Left ventricle myocardium inferior (tissue), 1 donor: ENCODE measurements at regions of chr3 and their contacts with region 1.

Region 1: DNA sequence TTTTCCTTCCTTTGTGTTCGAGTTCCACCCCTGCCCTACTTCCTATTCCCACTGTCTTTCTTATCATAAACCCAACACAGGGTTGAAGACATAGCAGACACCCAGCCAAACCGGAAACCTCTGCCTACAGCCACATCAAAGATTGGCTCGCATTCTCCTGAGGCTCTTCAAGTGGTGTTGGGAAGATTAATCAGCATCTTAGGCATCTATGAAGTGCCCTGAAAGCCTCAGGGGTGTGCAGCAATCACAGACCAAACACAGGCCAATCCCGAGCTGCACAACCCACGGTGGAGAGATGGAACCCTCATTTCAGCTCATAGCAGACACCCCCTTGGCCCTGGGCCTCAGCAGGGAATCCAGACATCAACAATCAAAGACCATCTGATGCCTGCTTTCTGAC is 255.9 kb downstream of the XXYLT1 start:
- DNase-seq: no peak
- H3K4me3 ChIP-seq: no peak overlapping the region
- H3K27ac ChIP-seq: no peak overlapping the region
- H3K4me1 ChIP-seq: no peaks in the 10 kb centered on the region
- H3K27me3 ChIP-seq: no peaks in the 10 kb centered on the region
- CTCF ChIP-seq: no peak

Region 2: DNA sequence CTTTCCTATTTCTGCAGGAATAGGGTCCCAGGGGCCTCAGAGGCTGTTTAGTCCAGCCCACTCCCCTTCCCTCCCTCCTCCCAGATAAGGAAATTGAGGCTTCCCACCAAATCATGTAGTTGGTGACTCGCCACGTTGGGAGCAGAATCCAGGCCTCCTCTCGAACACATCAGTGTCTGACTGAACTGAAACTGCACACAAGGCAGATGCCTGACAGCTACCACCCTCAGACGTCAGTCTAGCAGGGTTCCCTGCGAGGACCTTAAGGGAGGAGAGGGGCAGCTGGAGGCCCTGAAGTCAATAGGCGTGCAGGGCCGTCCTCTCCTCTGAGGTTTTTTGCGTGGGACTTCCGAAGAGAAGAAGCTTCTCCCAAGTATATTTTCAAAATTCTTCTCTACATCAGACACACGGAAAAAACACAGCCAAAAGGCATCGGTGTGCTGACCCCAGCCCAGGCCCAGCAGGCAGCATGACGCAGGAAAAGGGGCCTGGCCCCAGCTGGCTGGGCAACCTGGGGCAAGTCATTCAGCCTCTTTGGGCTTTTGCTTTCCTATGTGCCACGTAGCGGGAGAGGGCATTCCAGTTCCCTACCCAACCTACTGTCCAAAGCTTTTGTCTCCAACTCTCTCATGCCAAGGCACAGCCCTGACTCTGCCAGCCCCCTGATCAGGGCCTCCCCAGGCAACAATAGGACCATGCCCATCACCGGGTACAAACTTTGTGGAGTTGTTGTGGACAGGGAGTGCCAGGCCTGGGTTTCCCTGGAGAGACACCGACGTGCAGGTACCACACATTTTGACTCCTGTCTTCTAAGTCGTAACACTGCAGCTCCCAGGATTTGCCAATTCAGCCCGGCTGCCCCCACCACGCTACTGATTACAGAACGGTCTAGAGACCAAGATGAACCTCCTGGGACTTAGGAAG is 27.2 kb before region 1 on chr3:
- intact Hi-C with region 1: loop called (anchors 2 kb)
- DNase-seq: no peak
- H3K4me3 ChIP-seq: no peak overlapping the region
- H3K27ac ChIP-seq: no peak overlapping the region
- H3K4me1 ChIP-seq: peaks cover 15% of the 10 kb centered on the region
- H3K27me3 ChIP-seq: no peaks in the 10 kb centered on the region
- CTCF ChIP-seq: no peak